ENCODE measurements at regions of chr11 and their contacts with region 1.

Region 1: GRCh38 chr11:10125522-10126133 is 168.4 kb downstream of the SBF2 start:
- DNase-seq: no peak
- H3K4me3 ChIP-seq: no peak overlapping the region
- H3K27ac ChIP-seq: no peak overlapping the region
- H3K4me1 ChIP-seq: no peaks in the 10 kb centered on the region
- H3K27me3 ChIP-seq: no peaks in the 10 kb centered on the region
- CTCF ChIP-seq: no peak

Region 2: GRCh38 chr11:10750838-10751580 is 625.4 kb after region 1 on chr11 and contains the start of gene CTR9:
- CTCF ChIA-PET with region 1: no interaction called
- POLR2A ChIA-PET with region 1: interaction called, 16 read pairs
- intact Hi-C with region 1: no loop called
- DNase-seq: peak; percentile 95
- H3K4me3 ChIP-seq: peak within 1 kb of the TSS; percentile 99
- H3K27ac ChIP-seq: peak within 1 kb of the TSS; percentile 95
- H3K4me1 ChIP-seq: no peaks in the 10 kb centered on the region
- H3K27me3 ChIP-seq: no peaks in the 10 kb centered on the region
- CTCF ChIP-seq: 0 out of 2 replicates have a peak, but pooled peaks have one; percentile 15
- total RNA-seq, gene CTR9: 45.9 and 49.3 TPM in 2 replicates

Measured in A673 (cell line).